Common myeloid progenitor, CD34-positive (primary cell): ENCODE measurements at regions of chr13 and their contacts with region 1.

Region 1: GRCh38 chr13:79679334-79679733 is 198.4 kb downstream of the NDFIP2 start:
- DNase-seq: peak; percentile 60 to 74 (median 66)
- H3K4me3 ChIP-seq: no peak overlapping the region
- H3K27ac ChIP-seq: no peak overlapping the region
- H3K4me1 ChIP-seq: no peaks in the 10 kb centered on the region
- H3K27me3 ChIP-seq: no peaks in the 10 kb centered on the region

Region 2: DNA sequence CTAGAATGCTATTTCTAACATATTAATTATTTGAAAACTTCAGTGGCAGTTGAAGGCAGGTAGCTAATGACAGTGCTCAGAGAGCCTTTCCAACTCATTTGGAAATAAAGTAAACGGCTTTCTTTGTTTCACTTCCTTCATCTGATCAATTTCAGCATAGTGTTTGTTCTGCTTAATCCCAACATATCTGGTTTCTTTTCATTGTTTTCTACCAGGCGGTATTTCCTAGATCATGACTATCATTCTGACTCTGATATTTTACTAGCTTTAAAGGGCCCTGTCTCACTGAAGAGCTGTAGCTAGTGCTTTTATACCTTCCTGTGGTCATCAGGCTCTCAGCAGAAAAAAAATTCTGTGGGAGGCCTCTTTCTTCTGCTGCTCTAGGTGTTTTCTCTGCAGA is 451.9 kb before region 1 on chr13:
- CTCF ChIA-PET with region 1: no interaction called
- POLR2A ChIA-PET with region 1: no interaction called
- DNase-seq: no peak
- H3K4me3 ChIP-seq: no peak overlapping the region
- H3K27ac ChIP-seq: no peak overlapping the region
- H3K4me1 ChIP-seq: no peaks in the 10 kb centered on the region
- H3K27me3 ChIP-seq: peaks cover 0 to 8% (median 0%) of the 10 kb centered on the region in 5 experiments

Region 3: DNA sequence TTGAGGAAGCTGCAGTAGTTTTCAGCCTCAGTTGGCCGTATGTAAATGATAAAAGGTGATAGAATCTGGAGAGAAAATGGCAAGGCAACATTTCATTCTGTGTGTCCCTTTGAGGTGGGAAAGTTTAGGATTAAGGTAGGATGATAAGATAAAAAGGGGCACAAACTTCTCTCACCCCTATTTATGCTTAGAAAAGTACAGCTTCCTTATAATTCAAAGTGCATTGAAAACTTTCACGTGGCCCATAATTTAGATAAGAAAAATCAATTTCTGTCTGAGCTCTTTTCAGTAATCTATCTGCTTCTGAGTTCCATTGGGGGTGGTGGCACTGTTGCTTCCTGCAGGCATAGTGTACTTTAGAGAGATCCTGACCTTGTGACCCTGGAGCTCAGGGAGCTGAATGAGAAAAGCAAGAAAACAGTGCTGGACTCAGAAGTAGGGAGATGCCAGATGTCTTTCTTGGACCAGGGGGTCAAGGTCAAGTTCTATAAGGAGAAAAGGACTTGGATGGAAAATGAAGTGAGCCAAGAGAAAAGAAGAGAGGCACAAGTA is 11.1 kb before region 1 on chr13:
- CTCF ChIA-PET with region 1: interaction called, 10 read pairs
- POLR2A ChIA-PET with region 1: no interaction called
- DNase-seq: no peak
- H3K4me3 ChIP-seq: no peak overlapping the region
- H3K27ac ChIP-seq: no peak overlapping the region
- H3K4me1 ChIP-seq: no peaks in the 10 kb centered on the region
- H3K27me3 ChIP-seq: no peaks in the 10 kb centered on the region

Region 4: DNA sequence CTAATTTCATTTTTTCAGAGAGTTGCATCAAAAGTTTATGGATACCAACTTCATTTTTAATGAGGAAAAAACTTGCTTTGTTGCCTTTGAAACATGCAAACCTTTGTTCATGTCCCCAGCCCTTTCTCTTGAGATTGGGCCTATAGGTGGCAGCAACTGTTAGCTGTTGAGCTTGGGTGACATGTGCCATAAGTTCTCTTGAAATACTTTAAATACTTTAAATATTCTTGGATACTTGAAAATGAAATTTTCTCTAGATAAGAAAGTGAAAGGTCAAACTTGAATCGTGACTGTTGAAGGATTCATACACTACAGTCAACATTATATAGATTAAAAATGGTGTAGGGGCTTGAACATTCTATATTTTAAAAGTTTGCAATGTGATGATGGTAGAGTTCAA is 96.5 kb after region 1 on chr13:
- CTCF ChIA-PET with region 1: no interaction called
- POLR2A ChIA-PET with region 1: no interaction called
- DNase-seq: peak; percentile 72 to 87 (median 84)
- H3K4me3 ChIP-seq: no peak overlapping the region
- H3K27ac ChIP-seq: no peak overlapping the region
- H3K4me1 ChIP-seq: no peaks in the 10 kb centered on the region
- H3K27me3 ChIP-seq: no peaks in the 10 kb centered on the region